Right lobe of liver (tissue), 6 donors: ENCODE measurements at regions of chr2 and their contacts with region 1.

Region 1: DNA sequence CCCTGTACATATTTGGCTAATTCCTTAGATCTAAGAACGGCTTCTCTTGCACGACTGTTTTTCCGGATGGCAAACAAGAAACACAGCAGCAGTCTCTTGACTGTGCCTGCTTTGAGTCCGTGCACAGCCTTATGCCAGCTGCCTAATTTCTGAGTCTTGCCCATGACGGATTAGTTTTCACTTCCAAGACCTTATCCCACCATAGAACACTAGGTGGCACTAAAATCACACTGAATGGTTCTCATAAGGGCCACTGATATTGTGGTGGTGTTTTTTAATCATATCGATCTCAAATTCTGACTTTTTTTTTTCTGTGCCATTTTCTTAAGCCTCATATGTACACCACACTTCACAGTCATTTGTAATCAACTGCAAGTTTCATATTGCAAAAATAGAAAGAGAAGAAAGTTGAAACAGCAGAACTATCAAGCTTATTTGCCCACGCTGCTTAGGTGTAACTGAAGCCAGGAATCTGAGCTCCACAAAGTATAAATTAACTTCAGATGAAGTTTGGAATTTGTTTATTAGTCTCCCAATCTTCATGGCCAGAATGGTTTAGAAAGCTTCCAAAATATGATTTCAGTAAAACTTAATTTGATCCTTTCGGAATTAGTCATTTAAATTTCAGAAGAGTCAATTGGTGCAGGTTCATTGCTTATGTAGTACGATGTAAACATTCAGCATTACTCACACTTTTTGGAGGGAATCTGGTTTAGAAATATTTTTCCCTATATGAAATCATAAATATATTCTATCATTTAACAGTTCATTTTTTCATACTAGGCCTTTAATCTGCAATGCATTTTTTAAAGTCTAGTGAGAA is 45.5 kb upstream of the SCN7A start:
- DNase-seq: no peak
- ATAC-seq: peak; percentile 91 to 96 (median 94)
- H3K4me3 ChIP-seq: no peak overlapping the region
- H3K27ac ChIP-seq: no peak overlapping the region
- H3K4me1 ChIP-seq: no peaks in the 10 kb centered on the region
- H3K27me3 ChIP-seq: no peaks in the 10 kb centered on the region
- CTCF ChIP-seq: peak; percentile 69 to 81 (median 74)
- POLR2A ChIP-seq: no peak

Region 2: GRCh38 chr2:167212014-167212648 is 672.6 kb after region 1 on chr2:
- intact Hi-C with region 1: loop called in 1 of 2 experiments (anchors 10 kb)
- DNase-seq: no peak
- ATAC-seq: peak; percentile 67 to 81 (median 74)
- H3K4me3 ChIP-seq: no peak overlapping the region
- H3K27ac ChIP-seq: no peak overlapping the region
- H3K4me1 ChIP-seq: no peaks in the 10 kb centered on the region
- H3K27me3 ChIP-seq: no peaks in the 10 kb centered on the region
- CTCF ChIP-seq: peak; percentile 58 to 77 (median 68)
- POLR2A ChIP-seq: no peak